ENCODE measurements at regions of chr12 and their contacts with region 1.

Region 1: DNA sequence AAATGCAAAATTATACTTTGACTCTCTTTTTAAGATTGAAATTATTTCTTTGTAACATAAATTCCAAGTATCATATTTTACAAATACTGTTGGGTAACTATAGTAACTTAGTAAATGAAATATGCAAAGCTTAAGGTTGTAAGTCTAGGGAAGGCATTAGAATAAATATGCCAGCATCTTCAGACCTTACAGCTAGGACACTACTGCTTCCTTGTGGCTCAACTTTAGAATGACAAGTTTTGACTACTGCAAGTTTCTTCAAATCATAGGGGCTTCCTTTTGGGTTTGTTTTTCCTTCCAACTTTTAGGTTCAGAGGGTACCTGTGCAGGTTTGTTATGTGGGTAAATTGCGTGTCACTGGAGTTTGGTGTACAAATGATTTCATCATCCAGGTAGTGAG is 17.7 kb upstream of the ANP32D start:
- DNase-seq: no peak
- H3K4me3 ChIP-seq: no peak overlapping the region
- H3K27ac ChIP-seq: no peak overlapping the region
- H3K4me1 ChIP-seq: no peaks in the 10 kb centered on the region
- H3K27me3 ChIP-seq: no peaks in the 10 kb centered on the region
- CTCF ChIP-seq: peak in 2 of 4 experiments; percentile 25 to 36
- POLR2A ChIP-seq: no peak

Region 2: GRCh38 chr12:48157018-48157888 is 297.4 kb before region 1 on chr12 and contains the start of gene ASB8:
- intact Hi-C with region 1: no loop called
- DNase-seq: peak; percentile 96
- H3K4me3 ChIP-seq: peak within 1 kb of the TSS; percentile 72 to 75
- H3K27ac ChIP-seq: peak within 1 kb of the TSS; percentile 68 to 82
- H3K4me1 ChIP-seq: no peaks in the 10 kb centered on the region
- H3K27me3 ChIP-seq: no peaks in the 10 kb centered on the region
- CTCF ChIP-seq: peak in 3 of 4 experiments; percentile 37 to 73 (median 67)
- POLR2A ChIP-seq: peak; percentile 31
- total RNA-seq, gene ASB8: 38.8 to 43.2 TPM

Region 3: DNA sequence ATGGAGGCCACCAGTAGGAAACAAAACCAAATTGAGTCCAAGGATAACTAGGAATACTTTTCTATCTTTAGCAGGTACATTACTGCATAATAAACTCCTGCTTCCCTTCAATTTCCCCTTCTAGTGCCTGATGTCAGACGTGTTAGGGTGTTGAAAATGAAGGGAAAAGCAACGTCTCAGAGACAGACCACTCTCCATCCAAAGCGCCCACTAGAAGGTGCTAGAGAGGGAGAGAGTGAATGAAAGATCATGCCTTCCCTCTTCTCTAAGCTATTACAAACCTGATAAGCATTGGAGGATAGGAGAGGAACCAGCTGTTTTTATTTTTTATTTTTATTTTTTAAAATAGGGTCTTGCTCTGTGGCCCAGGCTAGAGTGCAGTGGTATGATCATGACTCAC is 168.0 kb before region 1 on chr12:
- intact Hi-C with region 1: loop called (anchors 10 kb)
- DNase-seq: no peak
- H3K4me3 ChIP-seq: no peak overlapping the region
- H3K27ac ChIP-seq: no peak overlapping the region
- H3K4me1 ChIP-seq: no peaks in the 10 kb centered on the region
- H3K27me3 ChIP-seq: no peaks in the 10 kb centered on the region
- CTCF ChIP-seq: no peak
- POLR2A ChIP-seq: no peak

Region 4: GRCh38 chr12:48422060-48422459 is 32.6 kb before region 1 on chr12:
- intact Hi-C with region 1: no loop called
- DNase-seq: no peak
- H3K4me3 ChIP-seq: no peak overlapping the region
- H3K27ac ChIP-seq: no peak overlapping the region
- H3K4me1 ChIP-seq: no peaks in the 10 kb centered on the region
- H3K27me3 ChIP-seq: no peaks in the 10 kb centered on the region
- CTCF ChIP-seq: no peak
- POLR2A ChIP-seq: no peak

Measured in prostate gland (tissue), 2 donors.